ENCODE measurements at regions of chr1 and their contacts with region 1.

Region 1: DNA sequence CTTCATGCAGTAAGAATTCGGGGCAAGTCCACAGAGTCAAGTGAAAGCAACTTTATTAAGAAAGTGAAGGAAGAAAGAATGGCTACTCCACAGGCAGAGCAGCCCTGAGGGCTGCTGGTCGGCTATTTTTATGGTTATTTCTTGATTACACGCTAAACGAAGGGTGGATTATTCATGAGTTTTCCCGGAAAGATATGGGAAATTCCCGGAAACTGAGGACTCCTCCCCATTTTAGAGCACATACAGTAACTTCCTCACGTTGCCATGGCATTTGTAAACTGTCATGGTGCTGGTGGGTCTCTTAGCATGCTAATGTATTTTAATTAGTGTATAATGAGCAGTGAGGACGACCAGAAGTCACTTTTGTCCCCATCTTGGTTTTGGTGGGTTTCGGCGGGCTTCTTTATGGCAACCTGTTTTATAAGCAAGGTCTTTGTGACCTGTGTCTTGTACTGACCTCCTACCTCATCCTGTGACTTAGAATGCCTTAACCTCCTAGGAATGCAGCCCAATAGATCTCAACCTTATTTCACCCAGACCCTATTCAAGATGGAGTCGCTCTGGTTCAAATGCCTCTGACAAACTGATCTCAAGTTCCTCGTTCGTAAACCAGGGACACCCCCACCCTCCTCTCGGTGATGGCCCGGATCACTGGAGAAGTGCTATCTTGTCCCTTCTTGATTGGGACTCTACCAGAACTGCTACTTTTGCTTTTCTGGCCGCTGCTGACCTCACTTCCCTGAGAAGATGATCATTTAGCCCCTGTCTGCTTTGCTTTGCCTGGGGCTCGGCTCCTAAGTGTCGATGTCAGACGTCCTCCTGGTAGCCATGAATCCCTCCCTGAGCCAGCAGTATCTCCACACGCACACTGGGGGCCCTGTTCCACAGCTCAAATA is 48.8 kb downstream of the CLSTN1 start:
- DNase-seq: no peak
- H3K4me3 ChIP-seq: no peak overlapping the region
- H3K27ac ChIP-seq: no peak overlapping the region
- H3K4me1 ChIP-seq: peaks cover 5% of the 10 kb centered on the region
- H3K27me3 ChIP-seq: no peaks in the 10 kb centered on the region
- CTCF ChIP-seq: no peak

Region 2: GRCh38 chr1:9676815-9677393 is 98.1 kb before region 1 on chr1:
- CTCF ChIA-PET with region 1: no interaction called
- dilution Hi-C with region 1: loop called (anchors 5 kb)
- in situ Hi-C with region 1: no loop called
- intact Hi-C with region 1: no loop called
- DNase-seq: no peak
- H3K4me3 ChIP-seq: no peak overlapping the region
- H3K27ac ChIP-seq: no peak overlapping the region
- H3K4me1 ChIP-seq: peaks cover under 1% of the 10 kb centered on the region
- H3K27me3 ChIP-seq: no peaks in the 10 kb centered on the region
- CTCF ChIP-seq: no peak

Region 3: DNA sequence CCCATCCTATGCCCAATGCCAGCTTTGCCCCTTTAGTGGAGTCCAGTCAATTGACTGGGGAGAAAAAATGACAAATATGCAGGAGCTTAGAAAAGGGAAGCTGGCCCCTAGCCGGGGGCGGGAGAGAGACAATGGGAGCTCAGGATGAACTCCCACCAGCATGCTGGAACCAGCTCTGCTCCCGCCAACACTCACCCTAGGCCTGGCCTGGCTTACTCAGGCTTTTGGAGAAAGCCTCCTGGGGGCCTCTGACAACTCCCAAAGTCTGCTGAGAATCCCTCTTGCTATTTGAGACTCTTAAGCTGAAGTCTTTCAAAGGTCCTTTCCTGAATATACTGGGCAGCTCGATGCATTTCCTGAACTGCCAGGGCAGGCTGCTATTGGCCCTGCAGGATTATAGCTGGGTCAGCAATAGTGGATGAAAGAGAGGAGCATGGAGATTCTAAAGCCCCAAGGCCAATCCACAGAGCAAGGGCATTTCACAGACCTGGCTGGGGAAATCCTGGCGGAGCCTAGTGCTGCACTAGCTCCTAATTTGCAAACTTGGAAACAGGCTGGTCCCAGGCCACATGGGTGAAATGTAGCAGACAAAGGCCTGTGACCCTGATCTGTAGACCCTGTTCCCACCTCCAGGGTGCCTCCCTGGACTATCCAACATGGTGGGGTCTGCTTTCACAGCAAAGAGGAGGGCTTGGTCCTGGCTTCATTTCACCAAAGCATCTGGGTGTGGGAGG is 84.5 kb after region 1 on chr1:
- CTCF ChIA-PET with region 1: no interaction called
- dilution Hi-C with region 1: loop called (anchors 5 kb)
- in situ Hi-C with region 1: no loop called
- intact Hi-C with region 1: no loop called
- DNase-seq: no peak
- H3K4me3 ChIP-seq: no peak overlapping the region
- H3K27ac ChIP-seq: no peak overlapping the region
- H3K4me1 ChIP-seq: no peaks in the 10 kb centered on the region
- H3K27me3 ChIP-seq: no peaks in the 10 kb centered on the region
- CTCF ChIP-seq: no peak

Region 4: DNA sequence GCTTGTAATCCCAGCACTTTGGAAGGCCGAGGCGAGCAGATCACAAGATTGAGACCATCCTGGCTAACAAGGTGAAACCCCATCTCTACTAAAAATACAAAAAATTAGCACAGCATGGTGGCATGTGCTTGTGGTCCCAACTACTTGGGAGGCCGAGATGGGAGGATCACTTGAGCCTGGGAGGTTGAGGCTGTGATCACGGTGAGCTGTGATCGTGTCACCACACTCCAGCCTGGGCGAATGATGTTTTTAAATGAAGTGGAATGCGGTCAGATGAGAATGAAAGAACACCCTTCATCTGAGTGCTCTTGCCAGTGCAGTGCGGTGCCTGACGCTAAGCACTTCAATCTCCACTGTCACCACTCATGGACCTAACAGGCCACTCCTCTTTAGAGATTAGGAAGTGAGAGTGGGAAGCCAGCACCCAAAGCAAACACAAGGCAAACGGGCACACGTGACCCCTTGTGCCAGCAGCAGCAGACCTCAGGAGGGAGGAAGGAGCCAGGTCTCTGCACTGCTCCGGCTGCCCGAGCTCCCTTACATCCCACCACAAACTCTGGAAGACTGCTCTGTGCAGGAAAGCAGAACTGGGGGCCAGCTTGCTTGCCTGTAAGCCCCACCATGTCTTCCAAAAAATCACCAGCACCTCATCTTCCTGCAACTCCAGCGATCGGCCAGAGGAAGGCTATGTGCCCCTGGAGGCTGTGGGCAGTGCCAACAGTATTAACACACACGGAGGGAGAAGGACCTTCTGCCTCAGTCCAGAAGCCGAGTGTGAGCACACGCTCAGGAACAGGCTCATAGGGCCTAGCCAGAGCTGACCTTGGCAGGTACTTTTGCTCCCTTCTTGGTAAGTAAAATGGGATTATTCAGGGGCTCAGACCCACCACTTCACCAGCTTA is 125.4 kb after region 1 on chr1:
- CTCF ChIA-PET with region 1: no interaction called
- dilution Hi-C with region 1: no loop called
- in situ Hi-C with region 1: no loop called
- intact Hi-C with region 1: no loop called
- DNase-seq: no peak
- H3K4me3 ChIP-seq: no peak overlapping the region
- H3K27ac ChIP-seq: no peak overlapping the region
- H3K4me1 ChIP-seq: peaks cover 24% of the 10 kb centered on the region
- H3K27me3 ChIP-seq: no peaks in the 10 kb centered on the region
- CTCF ChIP-seq: no peak

Measured in mammary epithelial cell (primary cell).